ENCODE measurements at regions of chr6 and their contacts with region 1.

Region 1: GRCh38 chr6:161418463-161418945 is 144.6 kb upstream of the AGPAT4 start:
- DNase-seq: no peak
- ATAC-seq: peak; percentile 72
- H3K4me3 ChIP-seq: no peak overlapping the region
- H3K27ac ChIP-seq: no peak overlapping the region
- H3K4me1 ChIP-seq: no peaks in the 10 kb centered on the region
- H3K27me3 ChIP-seq: no peaks in the 10 kb centered on the region

Region 2: GRCh38 chr6:161694995-161695394 is 276.5 kb after region 1 on chr6:
- intact Hi-C with region 1: loop called (anchors 5 to 10 kb)
- DNase-seq: no peak
- ATAC-seq: no peak
- H3K4me3 ChIP-seq: no peak overlapping the region
- H3K27ac ChIP-seq: no peak overlapping the region
- H3K4me1 ChIP-seq: no peaks in the 10 kb centered on the region
- H3K27me3 ChIP-seq: no peaks in the 10 kb centered on the region

Measured in aorta (tissue), 5 donors.